B cell (primary cell): ENCODE measurements at regions of chr17 and their contacts with region 1.

Region 1: GRCh38 chr17:3818786-3819185 is 17.8 kb upstream of the ITGAE start:
- DNase-seq: no peak
- ATAC-seq: peak; percentile 71
- H3K4me3 ChIP-seq: no peak overlapping the region
- H3K4me3 Mint-ChIP-seq: peak overlapping the region; percentile 53
- H3K27ac ChIP-seq: no peak overlapping the region
- H3K27ac Mint-ChIP-seq: peak overlapping the region; percentile 88
- H3K4me1 ChIP-seq: peaks cover 5 to 30% of the 10 kb centered on the region in 2 donors
- H3K4me1 Mint-ChIP-seq: peaks cover 26% of the 10 kb centered on the region
- H3K27me3 ChIP-seq: no peaks in the 10 kb centered on the region
- H3K27me3 Mint-ChIP-seq: no peaks in the 10 kb centered on the region
- CTCF ChIP-seq: no peak

Region 2: DNA sequence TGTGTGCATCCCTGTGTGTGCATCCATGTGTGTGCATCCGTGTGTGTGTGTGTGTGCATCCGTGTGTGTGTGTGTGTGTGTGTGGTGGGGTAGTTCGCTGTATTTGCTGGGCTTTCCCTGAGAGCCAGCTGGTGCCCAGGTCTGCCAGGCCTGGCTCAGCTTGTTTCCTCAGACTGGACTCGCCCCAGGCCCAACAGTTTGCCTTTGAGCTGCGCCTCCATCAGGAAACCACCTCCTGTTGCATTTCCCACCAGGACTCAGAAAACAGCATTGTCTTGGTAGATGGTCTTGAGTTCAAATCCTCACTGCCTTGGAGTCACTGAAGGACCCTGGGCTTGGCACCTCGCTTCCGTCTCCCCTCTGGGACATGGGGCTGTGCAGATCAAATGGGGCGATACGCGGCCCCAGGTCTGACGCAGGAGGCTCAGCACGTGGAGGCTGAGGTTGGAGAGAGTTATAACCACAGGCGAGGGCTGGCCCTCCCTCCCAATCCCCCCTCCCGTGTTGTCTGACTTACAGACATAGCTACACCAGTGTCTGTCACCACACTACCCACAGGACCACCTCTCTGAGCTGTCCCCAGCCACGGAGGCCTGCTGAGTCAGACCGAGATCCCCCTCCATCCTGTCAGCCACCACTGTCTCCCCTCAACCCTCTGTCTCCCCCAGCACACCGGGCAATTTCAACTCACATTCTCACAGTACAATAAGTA is 22.5 kb before region 1 on chr17:
- CTCF ChIA-PET with region 1: interaction called, 3 read pairs
- POLR2A ChIA-PET with region 1: interaction called, 4 read pairs
- intact Hi-C with region 1: loop called (anchors 1 kb)
- DNase-seq: peak; percentile 66
- ATAC-seq: peak; percentile 71
- H3K4me3 ChIP-seq: no peak overlapping the region
- H3K4me3 Mint-ChIP-seq: peak overlapping the region; percentile 61
- H3K27ac ChIP-seq: no peak overlapping the region
- H3K27ac Mint-ChIP-seq: peak overlapping the region; percentile 86
- H3K4me1 ChIP-seq: peaks cover 14 to 47% of the 10 kb centered on the region in 2 donors
- H3K4me1 Mint-ChIP-seq: peaks cover 48% of the 10 kb centered on the region
- H3K27me3 ChIP-seq: no peaks in the 10 kb centered on the region
- H3K27me3 Mint-ChIP-seq: no peaks in the 10 kb centered on the region
- CTCF ChIP-seq: no peak

Region 3: GRCh38 chr17:3836533-3836932 is 17.7 kb after region 1 on chr17:
- CTCF ChIA-PET with region 1: no interaction called
- POLR2A ChIA-PET with region 1: no interaction called
- intact Hi-C with region 1: no loop called
- DNase-seq: no peak
- ATAC-seq: no peak
- H3K4me3 ChIP-seq: no peak overlapping the region
- H3K4me3 Mint-ChIP-seq: no peak overlapping the region
- H3K27ac ChIP-seq: no peak overlapping the region
- H3K27ac Mint-ChIP-seq: no peak overlapping the region
- H3K4me1 ChIP-seq: no peaks in the 10 kb centered on the region
- H3K4me1 Mint-ChIP-seq: peaks cover 6% of the 10 kb centered on the region
- H3K27me3 ChIP-seq: no peaks in the 10 kb centered on the region
- H3K27me3 Mint-ChIP-seq: no peaks in the 10 kb centered on the region
- CTCF ChIP-seq: no peak

Region 4: DNA sequence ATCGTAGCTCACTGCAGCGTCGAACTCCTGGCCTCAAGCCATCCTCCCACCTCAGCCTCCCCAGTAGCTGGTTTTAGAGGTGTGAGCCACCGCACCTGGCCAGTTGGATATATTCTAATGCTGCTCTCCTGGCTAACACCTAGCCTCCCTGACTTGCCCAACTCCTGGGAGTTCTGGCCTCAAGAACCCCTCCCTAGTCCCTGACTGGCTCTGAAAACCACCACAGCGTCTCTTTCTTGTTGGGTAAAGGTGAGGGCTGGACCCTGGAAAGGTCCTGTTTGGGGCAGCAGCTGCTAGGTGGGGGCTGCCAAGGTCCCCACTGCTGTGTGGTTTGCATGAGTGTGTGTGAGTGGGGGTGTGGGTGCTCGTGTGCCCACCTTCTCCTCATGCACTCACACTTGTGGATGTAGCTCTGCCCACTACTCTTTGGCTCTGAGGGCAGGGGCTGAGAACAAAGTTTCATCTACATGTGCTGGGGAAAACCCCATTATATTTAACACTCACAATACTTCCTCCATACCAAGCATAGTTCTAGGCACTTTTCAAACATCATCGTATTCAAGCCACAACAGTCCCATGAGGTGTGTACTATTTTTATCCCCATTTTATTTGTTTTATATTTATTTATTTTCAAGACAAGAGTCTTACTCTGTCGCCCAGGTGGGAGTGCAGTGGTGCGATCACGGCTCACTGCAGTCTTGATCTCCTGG is 607.9 kb after region 1 on chr17:
- CTCF ChIA-PET with region 1: no interaction called
- POLR2A ChIA-PET with region 1: no interaction called
- intact Hi-C with region 1: no loop called
- DNase-seq: peak; percentile 39
- ATAC-seq: peak; percentile 41
- H3K4me3 ChIP-seq: peak overlapping the region in 1 of 5 experiments; percentile 12
- H3K4me3 Mint-ChIP-seq: peak overlapping the region; percentile 10
- H3K27ac ChIP-seq: no peak overlapping the region
- H3K27ac Mint-ChIP-seq: no peak overlapping the region
- H3K4me1 ChIP-seq: peaks cover 8 to 15% of the 10 kb centered on the region in 2 donors
- H3K4me1 Mint-ChIP-seq: peaks cover 10% of the 10 kb centered on the region
- H3K27me3 ChIP-seq: no peaks in the 10 kb centered on the region
- H3K27me3 Mint-ChIP-seq: no peaks in the 10 kb centered on the region
- CTCF ChIP-seq: no peak